K562 (cell line): ENCODE measurements at regions of chr10 and their contacts with region 1.

Region 1: DNA sequence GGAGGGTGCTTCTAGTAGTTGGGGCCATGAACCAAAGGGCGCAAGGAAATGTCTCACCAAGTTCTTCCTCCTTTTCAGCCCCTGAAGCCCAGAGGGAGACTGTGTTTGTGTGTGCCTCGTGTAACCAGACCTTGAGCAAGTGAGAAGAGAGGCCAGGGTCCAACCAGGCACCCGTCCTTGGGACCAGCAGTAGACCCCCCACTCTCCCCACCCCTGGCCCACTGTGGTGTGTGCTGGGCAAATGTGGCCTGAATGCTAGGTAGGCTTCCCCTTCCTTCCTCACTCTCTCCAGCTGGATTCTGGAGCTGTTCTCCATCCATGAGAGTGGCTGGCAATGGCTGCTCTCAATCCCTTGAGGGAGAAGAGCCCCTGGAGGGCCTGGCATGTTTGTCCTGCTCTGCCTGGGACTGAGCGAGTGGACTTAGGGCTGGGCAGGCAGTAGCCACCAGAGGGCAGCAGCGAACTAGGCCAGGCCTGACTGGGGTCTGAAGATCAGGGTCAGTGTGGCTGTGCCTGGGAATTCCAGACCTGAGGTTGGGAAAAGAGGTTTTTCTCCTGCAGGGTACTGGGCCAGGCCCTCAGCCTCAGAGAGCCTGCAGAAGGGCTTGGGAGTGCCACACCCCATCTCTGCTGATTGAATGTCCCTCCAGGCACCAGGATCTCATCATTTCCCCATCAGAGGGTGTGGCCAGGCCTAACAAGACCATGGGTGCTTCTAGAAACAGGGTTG is 12.5 kb downstream of the SFRP5 start:
- DNase-seq: peak; percentile 60 to 69 (median 64)
- ATAC-seq: peak; percentile 97
- H3K4me3 ChIP-seq: no peak overlapping the region
- H3K27ac ChIP-seq: no peak overlapping the region
- H3K4me1 ChIP-seq: peaks cover 0 to 3% of the 10 kb centered on the region in 2 experiments; a peak in 2 of 5 replicates
- H3K27me3 ChIP-seq: no peaks in the 10 kb centered on the region
- CTCF ChIP-seq: peak; percentile 78 to 85 (median 81)
- EP300 ChIP-seq: no peak
- POLR2A ChIP-seq: no peak
- RAD21 ChIP-seq: peak; percentile 79 to 87

Region 2: GRCh38 chr10:97869091-97870042 is 110.0 kb after region 1 on chr10:
- CTCF ChIA-PET with region 1: interaction called, 17 read pairs
- POLR2A ChIA-PET with region 1: interaction called, 3 read pairs
- in situ Hi-C with region 1: loop called (anchors 25 kb)
- intact Hi-C with region 1: loop called (anchors 1 kb)
- DNase-seq: peak; percentile 69 to 81 (median 75)
- ATAC-seq: peak; percentile 99
- H3K4me3 ChIP-seq: no peak overlapping the region
- H3K27ac ChIP-seq: no peak overlapping the region
- H3K4me1 ChIP-seq: peaks cover 5 to 16% of the 10 kb centered on the region in 2 experiments; a peak in 3 of 5 replicates
- H3K27me3 ChIP-seq: peaks cover 7 to 44% of the 10 kb centered on the region in 2 experiments; a peak in 4 of 5 replicates
- CTCF ChIP-seq: peak; percentile 81 to 97 (median 96)
- EP300 ChIP-seq: no peak
- POLR2A ChIP-seq: no peak
- RAD21 ChIP-seq: peak; percentile 93 to 95

Region 3: DNA sequence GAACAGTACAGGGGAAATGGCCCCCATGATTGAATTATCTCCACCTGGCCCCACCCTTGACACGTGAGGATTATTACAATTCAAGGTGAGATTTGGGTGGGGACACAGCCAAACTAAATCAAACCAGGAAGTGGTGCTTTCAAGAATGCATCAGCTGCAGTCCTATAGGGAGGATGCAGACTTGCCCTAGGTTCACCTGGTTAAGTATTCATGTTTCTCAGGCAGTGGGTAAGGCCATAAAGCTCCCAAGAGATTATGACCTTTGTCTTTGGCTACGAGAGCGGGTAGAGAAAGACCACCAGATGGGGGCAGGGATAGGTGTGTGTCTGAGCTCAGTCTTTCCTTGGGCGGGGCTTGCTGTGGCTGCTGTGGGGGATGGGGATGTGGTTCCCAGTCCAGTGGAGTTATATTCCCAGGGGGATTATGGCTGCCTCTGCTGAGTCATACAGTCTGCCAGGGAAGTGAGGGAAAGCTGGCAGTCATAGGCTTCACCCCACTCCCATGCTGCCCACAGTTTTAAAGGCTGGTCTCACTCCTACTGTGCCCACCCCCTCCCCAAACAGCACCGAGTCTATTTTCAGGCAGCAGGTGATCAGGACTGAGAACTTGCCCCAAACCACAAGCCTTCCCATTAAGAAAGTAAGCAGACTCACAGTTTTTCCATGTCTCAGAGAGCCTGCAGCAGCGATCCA is 366.8 kb after region 1 on chr10:
- CTCF ChIA-PET with region 1: no interaction called
- POLR2A ChIA-PET with region 1: no interaction called
- in situ Hi-C with region 1: no loop called
- intact Hi-C with region 1: no loop called
- DNase-seq: no peak
- ATAC-seq: no peak
- H3K4me3 ChIP-seq: no peak overlapping the region
- H3K27ac ChIP-seq: no peak overlapping the region
- H3K4me1 ChIP-seq: no peaks in the 10 kb centered on the region
- H3K27me3 ChIP-seq: peaks cover 4 to 5% of the 10 kb centered on the region in 2 experiments; a peak in 3 of 5 replicates
- CTCF ChIP-seq: no peak
- EP300 ChIP-seq: no peak
- POLR2A ChIP-seq: no peak
- RAD21 ChIP-seq: no peak